ENCODE measurements at regions of chr6 and their contacts with region 1.

Region 1: DNA sequence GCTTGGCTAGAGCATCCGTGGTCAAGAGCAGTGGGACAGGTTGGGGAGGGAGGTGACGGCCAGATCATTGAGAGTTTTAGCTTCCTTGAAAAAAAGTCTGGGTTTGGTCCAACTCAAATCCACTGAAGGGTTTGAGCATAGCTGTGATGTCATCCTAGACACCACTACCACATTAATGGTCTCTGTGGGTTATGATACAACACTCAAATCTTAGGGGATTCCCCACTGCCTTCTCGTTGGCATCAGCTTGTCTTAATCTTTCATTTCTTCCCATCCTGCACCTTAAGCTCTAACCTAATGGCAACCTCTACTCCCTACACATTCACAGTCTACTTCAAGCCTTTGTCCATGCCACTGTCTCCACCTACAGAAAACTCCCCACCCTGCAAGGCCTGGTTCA is 77.3 kb downstream of the BMP6 start:
- DNase-seq: no peak
- H3K4me3 ChIP-seq: no peak overlapping the region
- H3K27ac ChIP-seq: no peak overlapping the region
- H3K4me1 ChIP-seq: 0 out of 2 replicates have a peak, but pooled peaks cover 9% of the 10 kb centered on the region
- H3K27me3 ChIP-seq: no peaks in the 10 kb centered on the region
- CTCF ChIP-seq: no peak

Region 2: DNA sequence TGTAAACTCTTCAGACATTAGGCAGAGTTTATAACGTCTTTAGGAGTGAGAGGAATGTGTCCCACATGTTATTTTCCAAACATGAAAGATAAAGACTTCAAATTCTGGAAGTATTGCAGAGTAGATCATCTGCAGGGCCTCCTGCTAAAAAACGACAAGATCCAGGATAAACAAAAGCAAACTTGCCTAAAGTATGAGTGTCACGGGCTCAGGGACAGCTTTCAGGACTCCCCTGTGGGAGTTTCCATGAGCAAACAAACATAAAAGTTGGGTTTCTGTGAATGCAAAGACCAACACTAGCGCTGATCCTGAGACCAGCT is 30.5 kb after region 1 on chr6:
- CTCF ChIA-PET with region 1: no interaction called
- POLR2A ChIA-PET with region 1: no interaction called
- intact Hi-C with region 1: loop called (anchors 1 kb)
- DNase-seq: no peak
- H3K4me3 ChIP-seq: no peak overlapping the region
- H3K27ac ChIP-seq: no peak overlapping the region
- H3K4me1 ChIP-seq: no peaks in the 10 kb centered on the region
- H3K27me3 ChIP-seq: no peaks in the 10 kb centered on the region
- CTCF ChIP-seq: no peak

Measured in PC-9 (cell line).